ENCODE measurements at regions of chr19 and their contacts with region 1.

Region 1: DNA sequence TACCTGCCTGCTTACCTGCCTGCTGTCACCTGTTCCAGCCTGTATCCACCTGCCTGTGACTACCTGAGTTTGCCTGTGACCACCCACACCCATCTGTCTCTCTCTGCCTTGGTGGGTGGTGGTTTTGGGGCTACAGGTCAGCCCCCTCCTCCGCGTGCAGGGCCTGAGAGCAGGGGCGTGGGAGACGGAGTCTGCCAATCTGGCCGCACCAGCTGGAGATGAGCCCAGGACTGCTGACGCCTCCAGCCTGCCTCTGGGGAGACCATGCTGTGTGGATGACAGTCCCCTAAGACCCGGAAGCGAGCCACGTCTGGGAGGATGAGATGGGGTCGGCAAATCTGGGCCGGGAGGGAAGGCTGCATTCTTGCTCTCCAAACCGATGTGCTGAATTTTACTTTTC is 15.9 kb upstream of the KCTD15 start:
- DNase-seq: no peak
- ATAC-seq: no peak
- H3K4me3 ChIP-seq: no peak overlapping the region
- H3K27ac ChIP-seq: no peak overlapping the region
- H3K4me1 ChIP-seq: peaks cover 12% of the 10 kb centered on the region
- H3K27me3 ChIP-seq: peaks cover 0 to 5% of the 10 kb centered on the region in 2 donors
- CTCF ChIP-seq: no peak
- POLR2A ChIP-seq: no peak

Region 2: GRCh38 chr19:33998739-33999345 is 218.1 kb after region 1 on chr19:
- intact Hi-C with region 1: loop called (anchors 5 kb)
- DNase-seq: no peak
- ATAC-seq: no peak
- H3K4me3 ChIP-seq: no peak overlapping the region
- H3K27ac ChIP-seq: no peak overlapping the region
- H3K4me1 ChIP-seq: no peaks in the 10 kb centered on the region
- H3K27me3 ChIP-seq: no peaks in the 10 kb centered on the region
- CTCF ChIP-seq: peak; percentile 16 to 63 (median 45)
- POLR2A ChIP-seq: no peak

Region 3: DNA sequence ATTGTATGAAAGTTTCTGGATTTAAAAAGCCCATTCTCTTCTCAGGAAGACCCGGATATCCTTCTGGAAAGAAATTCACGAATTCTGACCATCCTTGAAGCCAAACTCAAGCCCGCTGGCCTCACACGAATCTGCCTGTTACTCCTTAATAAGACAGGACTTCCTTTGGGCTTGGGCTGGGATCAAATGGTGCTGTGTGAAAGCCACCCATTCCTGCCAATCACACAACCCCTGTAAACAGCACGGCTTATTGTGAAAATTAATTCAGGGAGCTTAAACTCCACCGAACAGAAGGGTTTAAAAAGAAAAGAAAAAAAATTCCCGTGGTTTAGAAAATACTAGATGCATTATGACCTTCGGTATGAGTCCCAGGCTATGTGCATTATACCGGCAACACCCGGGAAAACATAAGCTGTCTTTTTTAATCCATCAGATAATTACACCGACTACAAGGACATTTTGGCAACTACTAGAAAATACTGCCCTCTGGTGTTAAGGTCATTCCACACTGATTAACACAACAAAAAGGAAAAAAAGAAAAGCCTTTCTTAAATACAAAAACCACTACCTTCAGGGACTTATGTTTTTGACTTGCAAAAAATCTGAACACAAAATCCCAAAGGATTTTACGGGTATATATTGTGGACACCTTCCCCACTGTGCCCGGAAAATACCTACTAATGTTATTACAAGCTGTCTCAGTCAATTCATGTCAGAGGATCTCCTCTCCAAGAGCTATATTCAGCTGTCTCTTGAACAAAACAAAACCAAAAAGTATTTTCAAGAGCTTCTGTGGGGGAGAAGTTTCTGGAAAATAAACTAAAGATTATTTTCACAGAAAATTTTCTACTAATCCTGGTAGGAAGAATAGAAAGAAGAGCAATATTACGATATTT is 315.5 kb after region 1 on chr19:
- intact Hi-C with region 1: loop called (anchors 2 kb)
- DNase-seq: peak in 1 of 4 donors; percentile 6
- ATAC-seq: peak; percentile 67
- H3K4me3 ChIP-seq: no peak overlapping the region
- H3K27ac ChIP-seq: no peak overlapping the region
- H3K4me1 ChIP-seq: no peaks in the 10 kb centered on the region
- H3K27me3 ChIP-seq: peaks cover 0 to 4% of the 10 kb centered on the region in 2 donors
- CTCF ChIP-seq: peak in 6 of 7 experiments; percentile 37 to 81 (median 80)
- POLR2A ChIP-seq: no peak